Activated CD4-positive, alpha-beta memory T cell treated with anti-CD3 and anti-CD28 coated beads for 36 hours (primary cell): ENCODE measurements at regions of chrX and their contacts with region 1.

Region 1: DNA sequence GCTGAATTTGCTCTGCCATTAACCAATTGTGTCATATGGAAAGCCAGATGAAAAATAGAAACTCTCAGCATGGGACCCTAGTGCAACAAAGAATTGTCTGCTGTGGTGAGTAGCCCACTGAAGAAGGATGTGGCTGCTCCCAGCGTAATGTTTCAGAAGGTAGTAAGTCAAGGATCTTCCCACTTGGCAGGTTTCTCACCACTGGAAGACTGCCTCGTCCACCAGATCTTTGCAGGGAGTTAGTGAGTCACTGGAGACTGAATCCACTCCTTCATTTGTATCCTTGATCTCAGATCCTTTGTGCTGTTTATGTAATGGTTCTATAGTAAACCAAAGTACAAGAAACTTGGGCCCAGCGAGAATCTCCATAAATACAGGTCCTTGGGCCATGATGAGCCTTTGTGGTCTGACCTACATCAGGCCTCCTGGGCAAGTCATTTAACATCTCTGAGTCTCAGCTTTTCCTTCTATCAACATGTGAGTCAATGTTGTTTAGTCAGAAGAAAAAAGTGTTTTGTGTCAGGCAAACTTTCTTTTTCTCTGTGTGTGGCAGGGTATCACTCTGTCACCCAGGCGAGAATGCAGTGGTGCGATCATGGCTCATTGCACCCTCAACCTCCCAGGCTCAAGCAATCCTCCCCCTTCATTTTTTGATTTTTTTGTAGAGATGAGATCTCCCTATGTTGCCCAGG is 78.0 kb upstream of the CCDC160 start:
- DNase-seq: peak; percentile 65
- H3K4me3 Mint-ChIP-seq: no peak overlapping the region
- H3K27ac Mint-ChIP-seq: peak overlapping the region; percentile 71
- H3K4me1 Mint-ChIP-seq: peaks cover 13% of the 10 kb centered on the region
- H3K27me3 Mint-ChIP-seq: peaks cover 2% of the 10 kb centered on the region

Region 2: GRCh38 chrX:133947996-133948395 is 211.0 kb before region 1 on chrX:
- CTCF ChIA-PET with region 1: no interaction called
- POLR2A ChIA-PET with region 1: no interaction called
- intact Hi-C with region 1: no loop called
- DNase-seq: no peak
- H3K4me3 Mint-ChIP-seq: no peak overlapping the region
- H3K27ac Mint-ChIP-seq: no peak overlapping the region
- H3K4me1 Mint-ChIP-seq: no peaks in the 10 kb centered on the region
- H3K27me3 Mint-ChIP-seq: no peaks in the 10 kb centered on the region

Region 3: GRCh38 chrX:134006484-134007161 is 152.3 kb before region 1 on chrX:
- CTCF ChIA-PET with region 1: no interaction called
- POLR2A ChIA-PET with region 1: no interaction called
- intact Hi-C with region 1: loop called (anchors 1 kb)
- DNase-seq: peak; percentile 46
- H3K4me3 Mint-ChIP-seq: no peak overlapping the region
- H3K27ac Mint-ChIP-seq: no peak overlapping the region
- H3K4me1 Mint-ChIP-seq: peaks cover 2% of the 10 kb centered on the region
- H3K27me3 Mint-ChIP-seq: peaks cover 4% of the 10 kb centered on the region